Heart left ventricle (tissue), 16 donors: ENCODE measurements at regions of chr7 and their contacts with region 1.

Region 1: GRCh38 chr7:151381348-151382078 is 28.3 kb downstream of the WDR86 start:
- DNase-seq: peak in 2 of 5 donors; percentile 18 to 69
- ATAC-seq: peak in 1 of 4 donors; percentile 28
- H3K4me3 ChIP-seq: peak overlapping the region; percentile 13 to 47 (median 40)
- H3K27ac ChIP-seq: no peak overlapping the region
- H3K4me1 ChIP-seq: peaks cover 0 to 21% (median 13%) of the 10 kb centered on the region in 12 donors
- H3K27me3 ChIP-seq: peaks cover 6 to 41% (median 19%) of the 10 kb centered on the region in 9 donors
- CTCF ChIP-seq: no peak
- POLR2A ChIP-seq: no peak

Region 2: GRCh38 chr7:151415375-151416112 is 34.0 kb after region 1 on chr7:
- intact Hi-C with region 1: loop called in 1 of 10 experiments (anchors 5 kb)
- DNase-seq: no peak
- ATAC-seq: no peak
- H3K4me3 ChIP-seq: no peak overlapping the region
- H3K27ac ChIP-seq: no peak overlapping the region
- H3K4me1 ChIP-seq: peaks cover 0 to 23% (median 0%) of the 10 kb centered on the region in 12 donors
- H3K27me3 ChIP-seq: peaks cover 0 to 45% (median 10%) of the 10 kb centered on the region in 9 donors
- CTCF ChIP-seq: no peak
- POLR2A ChIP-seq: no peak

Region 3: GRCh38 chr7:151432791-151433521 is 51.4 kb after region 1 on chr7:
- intact Hi-C with region 1: loop called in 2 of 10 experiments (anchors 10 kb)
- DNase-seq: no peak
- ATAC-seq: no peak
- H3K4me3 ChIP-seq: no peak overlapping the region
- H3K27ac ChIP-seq: no peak overlapping the region
- H3K4me1 ChIP-seq: peaks cover 0 to 21% (median 4%) of the 10 kb centered on the region in 12 donors
- H3K27me3 ChIP-seq: peaks cover 0 to 7% (median 0%) of the 10 kb centered on the region in 9 donors
- CTCF ChIP-seq: no peak
- POLR2A ChIP-seq: no peak

Region 4: GRCh38 chr7:151658778-151659177 is 277.3 kb after region 1 on chr7:
- intact Hi-C with region 1: no loop called
- DNase-seq: no peak
- ATAC-seq: no peak
- H3K4me3 ChIP-seq: no peak overlapping the region
- H3K27ac ChIP-seq: peak overlapping the region in 1 of 12 donors; percentile 8
- H3K4me1 ChIP-seq: peaks cover 0 to 7% (median 0%) of the 10 kb centered on the region in 12 donors
- H3K27me3 ChIP-seq: no peaks in the 10 kb centered on the region
- CTCF ChIP-seq: no peak
- POLR2A ChIP-seq: no peak